Heart right ventricle (tissue), 16 donors: ENCODE measurements at regions of chr15 and their contacts with region 1.

Region 1: DNA sequence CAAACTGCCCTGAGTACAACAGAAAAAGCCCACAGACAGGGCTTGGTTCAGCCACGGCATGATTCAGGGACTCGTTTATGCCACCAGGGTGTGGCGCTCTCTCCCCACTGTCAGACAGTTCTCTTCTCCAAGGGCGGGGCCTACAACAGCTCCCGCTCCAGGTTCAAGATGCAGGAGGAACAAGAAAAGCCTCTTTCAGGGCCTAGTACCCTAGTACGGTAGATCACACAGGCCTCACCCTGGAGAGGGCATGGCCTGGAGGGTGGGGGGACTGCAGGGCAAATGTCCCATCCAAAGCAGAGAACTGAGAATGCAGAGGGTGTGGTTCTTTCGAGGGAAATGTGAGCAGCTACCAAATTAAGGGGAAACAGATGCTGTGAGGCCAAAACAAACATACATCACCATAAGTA is 12.0 kb downstream of the MESD start:
- DNase-seq: peak; percentile 56 to 57
- ATAC-seq: peak; percentile 50 to 86 (median 78)
- H3K4me3 ChIP-seq: no peak overlapping the region
- H3K27ac ChIP-seq: no peak overlapping the region
- H3K4me1 ChIP-seq: peaks cover 0 to 29% (median 12%) of the 10 kb centered on the region in 9 donors
- H3K27me3 ChIP-seq: no peaks in the 10 kb centered on the region
- CTCF ChIP-seq: peak; percentile 13 to 69 (median 55)

Region 2: DNA sequence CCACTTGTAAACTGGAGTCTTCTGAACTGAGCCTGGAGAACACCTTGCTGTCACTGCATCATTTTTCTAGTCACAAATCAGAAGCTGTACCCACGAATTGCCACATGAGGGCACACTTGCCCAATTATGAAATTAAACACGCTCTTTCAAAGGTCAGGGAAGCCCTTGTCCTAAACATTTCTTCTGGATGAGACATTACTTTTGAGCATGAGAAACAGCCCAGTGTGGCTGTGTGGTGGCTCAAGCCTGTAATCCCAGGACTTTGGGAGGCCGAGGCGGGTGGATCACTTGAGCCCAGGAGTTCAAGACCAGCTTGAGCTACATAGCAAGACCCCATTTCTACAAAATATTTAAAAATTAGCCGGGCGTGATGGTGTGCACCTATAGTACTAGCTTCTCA is 128.9 kb after region 1 on chr15:
- intact Hi-C with region 1: loop called in 1 of 10 experiments (anchors 5 kb)
- DNase-seq: peak in 1 of 2 donors; percentile 47
- ATAC-seq: peak; percentile 57 to 87 (median 70)
- H3K4me3 ChIP-seq: no peak overlapping the region
- H3K27ac ChIP-seq: no peak overlapping the region
- H3K4me1 ChIP-seq: peaks cover 0 to 21% (median 2%) of the 10 kb centered on the region in 9 donors
- H3K27me3 ChIP-seq: no peaks in the 10 kb centered on the region
- CTCF ChIP-seq: peak; percentile 51 to 88 (median 78)

Region 3: DNA sequence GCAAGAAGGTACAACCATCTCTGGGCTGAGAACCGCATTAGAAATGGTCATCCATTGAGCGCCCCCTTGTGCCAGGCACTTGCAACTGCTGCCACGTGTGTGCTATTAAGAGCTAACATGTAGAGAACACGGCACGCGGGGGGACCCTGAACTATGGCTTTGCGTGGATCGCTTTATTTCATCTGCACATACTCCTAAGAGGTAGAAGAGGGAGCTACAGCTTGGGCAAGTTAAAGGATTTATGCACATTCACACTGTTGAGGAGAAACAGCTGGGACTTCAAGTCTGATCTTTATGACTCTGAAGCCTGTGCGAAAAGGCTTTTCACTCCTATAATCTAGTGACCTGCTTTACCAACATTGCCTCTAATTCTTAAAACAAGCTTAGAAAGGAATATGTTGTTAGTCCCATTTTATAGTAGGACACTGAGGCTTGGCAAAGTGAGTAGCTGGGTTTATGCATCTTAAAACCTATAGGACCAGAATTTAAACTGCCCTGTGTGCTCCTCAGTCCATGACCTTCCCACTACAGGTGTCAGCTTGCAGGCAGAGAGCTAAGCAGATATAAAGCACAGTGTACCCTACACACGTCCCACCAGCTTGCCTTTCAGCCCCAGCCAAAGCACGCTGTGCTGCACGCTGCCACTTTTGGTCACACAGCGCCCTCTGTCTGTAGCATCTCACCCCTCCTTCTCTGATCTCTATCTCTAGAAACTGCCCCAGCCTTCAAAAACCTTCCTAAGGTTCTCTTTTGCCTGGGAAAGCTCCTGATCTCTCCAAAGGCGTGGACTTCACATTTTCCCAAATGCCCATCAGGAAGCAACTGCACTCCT is 288.5 kb after region 1 on chr15:
- intact Hi-C with region 1: loop called in 6 of 10 experiments (anchors 1 to 5 kb)
- DNase-seq: peak; percentile 80 to 81
- ATAC-seq: peak; percentile 87 to 96 (median 94)
- H3K4me3 ChIP-seq: peak overlapping the region in 2 of 10 donors; percentile 27 to 29
- H3K27ac ChIP-seq: no peak overlapping the region
- H3K4me1 ChIP-seq: peaks cover 0 to 30% (median 15%) of the 10 kb centered on the region in 9 donors
- H3K27me3 ChIP-seq: peaks cover 0 to 6% (median 0%) of the 10 kb centered on the region in 7 donors
- CTCF ChIP-seq: peak; percentile 81 to 93 (median 86)